Naive thymus-derived CD8-positive, alpha-beta T cell (primary cell): ENCODE measurements at regions of chr14 and their contacts with region 1.

Region 1: GRCh38 chr14:100221533-100222223 is 17.3 kb upstream of the YY1 start:
- DNase-seq: peak; percentile 45 to 82 (median 64)
- ATAC-seq: peak; percentile 93
- H3K4me3 Mint-ChIP-seq: no peak overlapping the region
- H3K27ac Mint-ChIP-seq: no peak overlapping the region
- H3K4me1 Mint-ChIP-seq: peaks cover 7 to 16% (median 14%) of the 10 kb centered on the region in 4 donors
- H3K27me3 Mint-ChIP-seq: no peaks in the 10 kb centered on the region

Region 2: GRCh38 chr14:100067971-100068959 is 153.4 kb before region 1 on chr14:
- POLR2A ChIA-PET with region 1: interaction called, 46 read pairs
- DNase-seq: peak; percentile 61 to 93 (median 88)
- ATAC-seq: peak; percentile 54 to 59
- H3K4me3 Mint-ChIP-seq: peak overlapping the region; percentile 86 to 100 (median 98)
- H3K27ac Mint-ChIP-seq: peak overlapping the region; percentile 93 to 100 (median 99)
- H3K4me1 Mint-ChIP-seq: peaks cover 36 to 85% (median 73%) of the 10 kb centered on the region in 4 donors
- H3K27me3 Mint-ChIP-seq: no peaks in the 10 kb centered on the region

Region 3: GRCh38 chr14:100147181-100147631 is 74.5 kb before region 1 on chr14:
- POLR2A ChIA-PET with region 1: interaction called, 15 read pairs
- DNase-seq: peak; percentile 56 to 92 (median 80)
- ATAC-seq: peak; percentile 74 to 82
- H3K4me3 Mint-ChIP-seq: peak overlapping the region; percentile 74 to 88 (median 84)
- H3K27ac Mint-ChIP-seq: peak overlapping the region; percentile 78 to 98 (median 92)
- H3K4me1 Mint-ChIP-seq: peaks cover 15 to 42% (median 29%) of the 10 kb centered on the region in 4 donors
- H3K27me3 Mint-ChIP-seq: no peaks in the 10 kb centered on the region

Region 4: GRCh38 chr14:100239840-100240724 is 18.4 kb after region 1 on chr14:
- POLR2A ChIA-PET with region 1: interaction called, 265 read pairs
- DNase-seq: peak; percentile 76 to 90 (median 84)
- ATAC-seq: peak; percentile 51
- H3K4me3 Mint-ChIP-seq: peak overlapping the region; percentile 83 to 96 (median 92)
- H3K27ac Mint-ChIP-seq: peak overlapping the region; percentile 91 to 97 (median 96)
- H3K4me1 Mint-ChIP-seq: peaks cover 35 to 69% (median 60%) of the 10 kb centered on the region in 4 donors
- H3K27me3 Mint-ChIP-seq: no peaks in the 10 kb centered on the region

Region 5: GRCh38 chr14:100440187-100440631 is 218.5 kb after region 1 on chr14:
- POLR2A ChIA-PET with region 1: no interaction called
- DNase-seq: peak in 9 of 10 donors; percentile 11 to 77 (median 33)
- ATAC-seq: peak; percentile 70 to 96
- H3K4me3 Mint-ChIP-seq: no peak overlapping the region
- H3K27ac Mint-ChIP-seq: peak overlapping the region in 2 of 10 donors; percentile 52 to 53
- H3K4me1 Mint-ChIP-seq: peaks cover 17 to 44% (median 24%) of the 10 kb centered on the region in 4 donors
- H3K27me3 Mint-ChIP-seq: no peaks in the 10 kb centered on the region